Heart left ventricle (tissue), 16 donors: ENCODE measurements at regions of chr9 and their contacts with region 1.

Region 1: DNA sequence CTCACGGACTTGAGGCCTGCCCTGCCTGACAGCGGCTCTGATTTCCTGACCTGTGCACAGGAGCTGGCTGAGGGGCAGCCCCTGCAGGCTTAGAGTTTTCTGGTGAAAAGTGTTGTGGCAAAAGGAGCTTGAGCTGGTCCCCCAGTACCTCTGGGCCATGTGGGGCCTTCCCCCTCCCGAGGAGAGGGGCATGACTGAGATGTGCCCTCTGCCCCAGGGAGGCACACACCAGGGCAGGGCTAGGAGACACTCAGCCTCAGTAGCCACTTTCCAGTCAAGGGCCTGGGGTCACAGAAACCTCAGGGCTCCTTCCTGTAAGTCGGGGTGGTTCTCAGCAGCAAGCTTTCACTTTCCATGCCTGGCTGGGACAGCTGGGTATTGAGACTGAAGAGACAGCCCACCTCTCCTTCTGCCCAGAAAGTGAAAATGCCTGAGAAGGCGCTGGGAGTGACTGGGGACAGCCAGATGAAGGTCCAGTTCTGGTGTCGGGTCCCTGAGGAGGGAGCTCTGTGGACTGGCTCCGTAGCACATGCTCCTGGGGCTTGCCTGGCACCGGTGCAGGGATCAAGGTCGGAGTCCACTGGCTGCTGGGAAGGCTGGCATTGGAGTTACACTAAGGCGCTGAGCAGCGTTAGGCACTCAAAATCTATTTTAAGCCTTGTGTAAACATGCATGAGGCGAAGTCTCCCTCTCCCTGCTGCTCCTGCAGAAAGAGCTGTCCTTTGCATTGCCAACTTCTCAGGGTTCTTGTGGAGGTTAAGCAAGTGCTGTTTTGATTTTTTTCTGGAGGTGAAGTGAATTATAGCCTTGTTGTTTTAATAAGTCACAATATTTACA is 394.9 kb downstream of the GADD45G start:
- DNase-seq: peak; percentile 78 to 91 (median 81)
- ATAC-seq: peak; percentile 90 to 95 (median 92)
- H3K4me3 ChIP-seq: peak overlapping the region in 9 of 12 donors; percentile 0 to 44 (median 29)
- H3K27ac ChIP-seq: peak overlapping the region; percentile 67 to 91 (median 84)
- H3K4me1 ChIP-seq: peaks cover 10 to 58% (median 46%) of the 10 kb centered on the region in 12 donors
- H3K27me3 ChIP-seq: no peaks in the 10 kb centered on the region
- CTCF ChIP-seq: peak in 3 of 12 donors; percentile 17 to 39 (median 19)
- POLR2A ChIP-seq: no peak

Region 2: GRCh38 chr9:89588006-89588879 is 411.5 kb before region 1 on chr9:
- intact Hi-C with region 1: no loop called
- DNase-seq: no peak
- ATAC-seq: no peak
- H3K4me3 ChIP-seq: no peak overlapping the region
- H3K27ac ChIP-seq: no peak overlapping the region
- H3K4me1 ChIP-seq: no peaks in the 10 kb centered on the region
- H3K27me3 ChIP-seq: peaks cover 0 to 25% (median 0%) of the 10 kb centered on the region in 9 donors
- CTCF ChIP-seq: no peak
- POLR2A ChIP-seq: no peak

Region 3: DNA sequence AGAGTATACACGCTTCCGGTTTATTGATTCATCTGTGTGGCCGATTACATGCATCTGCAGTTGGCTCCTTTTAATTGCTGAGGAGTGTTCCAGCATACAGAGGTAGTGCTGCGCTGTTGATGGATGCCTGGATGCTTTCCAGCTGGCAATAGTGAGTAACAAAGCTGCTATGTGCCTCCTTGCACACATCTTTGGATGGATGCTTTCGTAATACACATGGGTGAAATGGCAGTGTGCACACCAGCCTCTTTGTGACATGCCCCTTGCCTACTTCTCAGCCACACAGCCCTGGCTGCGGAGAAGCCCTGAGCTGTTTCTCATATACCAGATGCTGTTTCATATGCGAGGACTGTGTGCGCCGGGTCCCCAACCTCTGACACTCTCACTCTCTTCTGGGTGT is 243.9 kb before region 1 on chr9:
- intact Hi-C with region 1: loop called in 1 of 10 experiments (anchors 5 kb)
- DNase-seq: peak in 4 of 5 donors; percentile 43 to 78 (median 57)
- ATAC-seq: peak; percentile 27 to 78 (median 68)
- H3K4me3 ChIP-seq: no peak overlapping the region
- H3K27ac ChIP-seq: no peak overlapping the region
- H3K4me1 ChIP-seq: peaks cover 0 to 22% (median 8%) of the 10 kb centered on the region in 12 donors
- H3K27me3 ChIP-seq: no peaks in the 10 kb centered on the region
- CTCF ChIP-seq: no peak
- POLR2A ChIP-seq: no peak

Region 4: DNA sequence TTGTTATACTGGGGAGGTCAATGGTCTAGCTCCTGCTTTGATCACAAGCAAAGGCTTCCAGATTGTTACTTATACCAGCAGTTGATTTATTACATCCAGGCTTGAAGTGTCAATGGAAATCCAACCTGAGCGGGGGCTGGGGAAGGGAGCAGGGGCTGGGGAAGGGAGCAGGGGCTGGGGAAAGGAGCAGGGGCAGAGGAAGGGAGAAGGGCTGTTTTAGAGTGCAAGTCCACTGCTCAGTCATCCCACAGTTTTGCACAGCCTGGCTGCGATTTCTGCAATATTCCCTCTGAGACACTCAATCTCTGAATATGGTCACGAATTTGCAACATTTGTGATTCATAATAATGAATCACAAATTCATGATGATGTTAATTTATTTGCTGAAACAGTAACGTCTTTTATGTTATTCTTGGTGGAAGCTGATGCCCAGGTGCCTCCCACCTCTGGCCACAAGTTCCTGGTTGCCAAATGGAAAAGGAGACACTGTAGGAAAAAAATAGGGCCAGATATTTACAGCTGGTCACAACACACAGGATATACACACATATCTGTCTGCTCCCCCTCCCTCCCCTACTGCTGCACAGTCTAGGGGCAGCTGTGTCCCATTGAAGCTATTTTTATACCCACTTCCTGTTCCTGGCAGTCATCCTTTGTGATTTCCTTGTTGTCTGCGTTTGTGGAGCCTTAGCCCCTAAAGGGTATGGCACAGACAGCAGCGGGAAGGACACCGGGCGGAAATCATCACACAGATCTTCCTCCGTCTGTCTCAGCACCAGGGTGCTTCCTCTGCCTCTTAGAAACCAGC is 69.9 kb before region 1 on chr9:
- intact Hi-C with region 1: loop called in 2 of 10 experiments (anchors 5 kb)
- DNase-seq: peak in 3 of 5 donors; percentile 27 to 55 (median 49)
- ATAC-seq: peak; percentile 79 to 92 (median 81)
- H3K4me3 ChIP-seq: no peak overlapping the region
- H3K27ac ChIP-seq: peak overlapping the region in 1 of 12 donors; percentile 45
- H3K4me1 ChIP-seq: peaks cover 0 to 33% (median 16%) of the 10 kb centered on the region in 12 donors
- H3K27me3 ChIP-seq: no peaks in the 10 kb centered on the region
- CTCF ChIP-seq: no peak
- POLR2A ChIP-seq: no peak

Region 5: DNA sequence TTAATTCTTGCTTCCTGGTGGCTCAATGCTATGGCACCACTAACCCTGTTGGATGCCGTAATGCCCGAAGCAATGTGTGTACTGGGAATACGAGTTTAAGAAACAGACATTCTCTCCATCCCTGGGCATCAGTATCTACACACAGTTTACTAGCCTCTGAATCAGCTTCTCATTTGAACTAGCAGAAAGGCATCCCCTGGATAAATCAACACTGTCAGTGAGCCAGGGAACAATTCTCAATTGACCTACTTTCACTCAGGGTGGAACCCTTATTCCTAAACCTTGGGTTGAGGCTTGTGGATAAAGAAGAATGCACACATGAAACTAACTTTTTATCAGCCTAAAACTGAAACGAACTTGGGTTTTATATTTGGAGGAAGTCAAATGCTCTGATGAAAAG is 64.0 kb before region 1 on chr9:
- intact Hi-C with region 1: loop called in 1 of 10 experiments (anchors 5 kb)
- DNase-seq: no peak
- ATAC-seq: peak in 1 of 4 donors; percentile 42
- H3K4me3 ChIP-seq: no peak overlapping the region
- H3K27ac ChIP-seq: no peak overlapping the region
- H3K4me1 ChIP-seq: peaks cover 0 to 9% (median 0%) of the 10 kb centered on the region in 12 donors
- H3K27me3 ChIP-seq: no peaks in the 10 kb centered on the region
- CTCF ChIP-seq: no peak
- POLR2A ChIP-seq: no peak